Caco-2 (cell line): ENCODE measurements at regions of chr12 and their contacts with region 1.

Region 1: GRCh38 chr12:31589904-31590641 is 863 bp downstream of the DENND5B start:
- DNase-seq: peak; percentile 90 to 91
- H3K4me3 ChIP-seq: peak overlapping the region; percentile 85
- H3K4me3 Mint-ChIP-seq: peak overlapping the region; percentile 90
- H3K27ac Mint-ChIP-seq: peak overlapping the region; percentile 70
- H3K4me1 ChIP-seq: peaks cover 15% of the 10 kb centered on the region; the same call in 1 of the 2 replicates
- H3K4me1 Mint-ChIP-seq: peaks cover 22% of the 10 kb centered on the region
- H3K27me3 ChIP-seq: no peaks in the 10 kb centered on the region
- H3K27me3 Mint-ChIP-seq: no peaks in the 10 kb centered on the region
- CTCF ChIP-seq: peak in 1 of 2 experiments; percentile 16

Region 2: DNA sequence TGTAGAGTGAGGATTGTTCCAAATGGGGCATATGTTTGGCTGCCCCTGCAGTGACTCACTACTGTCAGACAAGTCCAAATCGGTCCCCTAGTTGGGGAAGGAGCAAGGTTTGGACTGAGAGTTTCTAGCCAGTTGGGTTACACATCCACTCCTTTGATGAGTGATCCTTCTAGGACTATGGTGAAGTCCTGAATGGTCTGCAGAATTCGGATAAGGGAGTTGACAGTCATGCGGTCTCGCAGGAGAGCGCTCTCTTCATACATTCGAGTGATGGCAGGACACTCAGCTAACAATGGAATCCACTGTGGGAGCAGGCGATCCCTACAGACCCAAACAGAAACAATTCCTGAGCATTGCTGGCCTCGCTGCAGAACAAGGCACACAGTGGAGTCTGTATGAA is 202.6 kb before region 1 on chr12:
- CTCF ChIA-PET with region 1: no interaction called
- POLR2A ChIA-PET with region 1: no interaction called
- intact Hi-C with region 1: no loop called
- DNase-seq: peak in 1 of 2 experiments; percentile 23
- H3K4me3 ChIP-seq: no peak overlapping the region
- H3K4me3 Mint-ChIP-seq: no peak overlapping the region
- H3K27ac Mint-ChIP-seq: peak overlapping the region; percentile 82
- H3K4me1 ChIP-seq: peaks cover 59% of the 10 kb centered on the region
- H3K4me1 Mint-ChIP-seq: peaks cover 50% of the 10 kb centered on the region
- H3K27me3 ChIP-seq: no peaks in the 10 kb centered on the region
- H3K27me3 Mint-ChIP-seq: no peaks in the 10 kb centered on the region
- CTCF ChIP-seq: no peak

Region 3: DNA sequence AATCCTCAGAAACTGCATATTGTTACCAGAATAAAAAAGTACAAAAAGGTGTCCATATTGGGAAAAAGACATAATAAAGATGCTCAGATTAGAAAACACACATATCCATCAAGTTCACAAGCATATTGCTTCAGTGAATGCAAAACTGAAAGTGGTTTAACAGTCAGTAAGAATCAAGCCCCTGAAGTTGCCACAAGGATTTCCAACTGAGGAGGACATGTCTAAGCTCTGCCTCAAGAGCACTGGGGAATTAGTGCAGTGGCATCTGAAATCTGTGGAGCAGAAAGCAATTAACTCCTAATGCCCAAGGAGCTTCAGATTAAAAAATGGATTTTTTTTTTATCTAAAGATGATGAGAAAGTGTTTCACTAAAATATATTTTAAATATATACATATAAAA is 112.4 kb before region 1 on chr12:
- CTCF ChIA-PET with region 1: no interaction called
- POLR2A ChIA-PET with region 1: no interaction called
- intact Hi-C with region 1: loop called (anchors 5 kb)
- DNase-seq: no peak
- H3K4me3 ChIP-seq: no peak overlapping the region
- H3K4me3 Mint-ChIP-seq: no peak overlapping the region
- H3K27ac Mint-ChIP-seq: no peak overlapping the region
- H3K4me1 ChIP-seq: no peaks in the 10 kb centered on the region
- H3K4me1 Mint-ChIP-seq: peaks cover 20% of the 10 kb centered on the region
- H3K27me3 ChIP-seq: no peaks in the 10 kb centered on the region
- H3K27me3 Mint-ChIP-seq: no peaks in the 10 kb centered on the region
- CTCF ChIP-seq: no peak

Region 4: GRCh38 chr12:31620311-31620710 is 30.2 kb after region 1 on chr12:
- CTCF ChIA-PET with region 1: no interaction called
- POLR2A ChIA-PET with region 1: no interaction called
- intact Hi-C with region 1: loop called (anchors 1 kb)
- DNase-seq: peak; percentile 77 to 88
- H3K4me3 ChIP-seq: no peak overlapping the region
- H3K4me3 Mint-ChIP-seq: peak overlapping the region; percentile 30
- H3K27ac Mint-ChIP-seq: peak overlapping the region; percentile 95
- H3K4me1 ChIP-seq: peaks cover 36% of the 10 kb centered on the region
- H3K4me1 Mint-ChIP-seq: peaks cover 11% of the 10 kb centered on the region
- H3K27me3 ChIP-seq: no peaks in the 10 kb centered on the region
- H3K27me3 Mint-ChIP-seq: no peaks in the 10 kb centered on the region
- CTCF ChIP-seq: no peak